Caco-2 (cell line): ENCODE measurements at regions of chr3 and their contacts with region 1.

Region 1: GRCh38 chr3:71652781-71653413 is 69.4 kb upstream of the FOXP1 start:
- DNase-seq: peak; percentile 49 to 55
- H3K4me3 ChIP-seq: no peak overlapping the region
- H3K4me3 Mint-ChIP-seq: no peak overlapping the region
- H3K27ac Mint-ChIP-seq: peak overlapping the region; percentile 39
- H3K4me1 ChIP-seq: peaks cover 11% of the 10 kb centered on the region
- H3K4me1 Mint-ChIP-seq: peaks cover 16% of the 10 kb centered on the region
- H3K27me3 ChIP-seq: no peaks in the 10 kb centered on the region
- H3K27me3 Mint-ChIP-seq: peaks cover 2% of the 10 kb centered on the region
- CTCF ChIP-seq: peak; percentile 52 to 54

Region 2: GRCh38 chr3:70064194-70064779 is 1588.6 kb before region 1 on chr3:
- CTCF ChIA-PET with region 1: interaction called, 3 read pairs
- POLR2A ChIA-PET with region 1: no interaction called
- intact Hi-C with region 1: loop called (anchors 2 kb)
- DNase-seq: peak in 1 of 2 experiments; percentile 28
- H3K4me3 ChIP-seq: no peak overlapping the region
- H3K4me3 Mint-ChIP-seq: no peak overlapping the region
- H3K27ac Mint-ChIP-seq: no peak overlapping the region
- H3K4me1 ChIP-seq: no peaks in the 10 kb centered on the region
- H3K4me1 Mint-ChIP-seq: no peaks in the 10 kb centered on the region
- H3K27me3 ChIP-seq: no peaks in the 10 kb centered on the region
- H3K27me3 Mint-ChIP-seq: peaks cover 8% of the 10 kb centered on the region
- CTCF ChIP-seq: peak; percentile 60 to 61

Region 3: GRCh38 chr3:70550723-70551319 is 1102.1 kb before region 1 on chr3:
- CTCF ChIA-PET with region 1: interaction called, 3 read pairs
- POLR2A ChIA-PET with region 1: no interaction called
- intact Hi-C with region 1: loop called (anchors 5 kb)
- DNase-seq: peak; percentile 54 to 61
- H3K4me3 ChIP-seq: no peak overlapping the region
- H3K4me3 Mint-ChIP-seq: no peak overlapping the region
- H3K27ac Mint-ChIP-seq: no peak overlapping the region
- H3K4me1 ChIP-seq: no peaks in the 10 kb centered on the region
- H3K4me1 Mint-ChIP-seq: no peaks in the 10 kb centered on the region
- H3K27me3 ChIP-seq: no peaks in the 10 kb centered on the region
- H3K27me3 Mint-ChIP-seq: peaks cover 15% of the 10 kb centered on the region
- CTCF ChIP-seq: peak; percentile 52 to 63

Region 4: GRCh38 chr3:70849911-70850699 is 802.8 kb before region 1 on chr3:
- CTCF ChIA-PET with region 1: no interaction called
- POLR2A ChIA-PET with region 1: no interaction called
- intact Hi-C with region 1: no loop called
- DNase-seq: no peak
- H3K4me3 ChIP-seq: no peak overlapping the region
- H3K4me3 Mint-ChIP-seq: no peak overlapping the region
- H3K27ac Mint-ChIP-seq: no peak overlapping the region
- H3K4me1 ChIP-seq: no peaks in the 10 kb centered on the region; the same call in 1 of the 2 replicates
- H3K4me1 Mint-ChIP-seq: no peaks in the 10 kb centered on the region
- H3K27me3 ChIP-seq: no peaks in the 10 kb centered on the region
- H3K27me3 Mint-ChIP-seq: peaks cover 6% of the 10 kb centered on the region
- CTCF ChIP-seq: no peak

Region 5: GRCh38 chr3:71006810-71007785 is 645.8 kb before region 1 on chr3:
- CTCF ChIA-PET with region 1: no interaction called
- POLR2A ChIA-PET with region 1: no interaction called
- intact Hi-C with region 1: loop called (anchors 1 kb)
- DNase-seq: peak in 1 of 2 experiments; percentile 13
- H3K4me3 ChIP-seq: no peak overlapping the region
- H3K4me3 Mint-ChIP-seq: no peak overlapping the region
- H3K27ac Mint-ChIP-seq: no peak overlapping the region
- H3K4me1 ChIP-seq: peaks cover 15% of the 10 kb centered on the region
- H3K4me1 Mint-ChIP-seq: peaks cover 6% of the 10 kb centered on the region
- H3K27me3 ChIP-seq: no peaks in the 10 kb centered on the region
- H3K27me3 Mint-ChIP-seq: no peaks in the 10 kb centered on the region
- CTCF ChIP-seq: peak in 1 of 2 experiments; percentile 40

Region 6: GRCh38 chr3:71601811-71602210 is 51.1 kb before region 1 on chr3:
- CTCF ChIA-PET with region 1: interaction called, 8 read pairs
- POLR2A ChIA-PET with region 1: no interaction called
- intact Hi-C with region 1: loop called (anchors 5 kb)
- DNase-seq: no peak
- H3K4me3 ChIP-seq: no peak overlapping the region
- H3K4me3 Mint-ChIP-seq: no peak overlapping the region
- H3K27ac Mint-ChIP-seq: no peak overlapping the region
- H3K4me1 ChIP-seq: no peaks in the 10 kb centered on the region
- H3K4me1 Mint-ChIP-seq: peaks cover 5% of the 10 kb centered on the region
- H3K27me3 ChIP-seq: no peaks in the 10 kb centered on the region
- H3K27me3 Mint-ChIP-seq: no peaks in the 10 kb centered on the region
- CTCF ChIP-seq: no peak